Prostate gland (tissue), 2 donors: ENCODE measurements at regions of chr5 and their contacts with region 1.

Region 1: GRCh38 chr5:154467655-154468354 is 10.2 kb downstream of the HAND1 start:
- DNase-seq: peak; percentile 60
- H3K4me3 ChIP-seq: no peak overlapping the region
- H3K27ac ChIP-seq: no peak overlapping the region
- H3K4me1 ChIP-seq: no peaks in the 10 kb centered on the region
- H3K27me3 ChIP-seq: peaks cover 22% of the 10 kb centered on the region
- CTCF ChIP-seq: peak; percentile 68 to 96 (median 75)
- POLR2A ChIP-seq: no peak

Region 2: GRCh38 chr5:154610321-154611154 is 142.7 kb after region 1 on chr5:
- intact Hi-C with region 1: loop called (anchors 2 kb)
- DNase-seq: peak; percentile 60
- H3K4me3 ChIP-seq: peak overlapping the region; percentile 2 to 10
- H3K27ac ChIP-seq: no peak overlapping the region
- H3K4me1 ChIP-seq: peaks cover 4% of the 10 kb centered on the region
- H3K27me3 ChIP-seq: no peaks in the 10 kb centered on the region
- CTCF ChIP-seq: peak; percentile 54 to 86 (median 72)
- POLR2A ChIP-seq: no peak